HepG2 (cell line): ENCODE measurements at regions of chr12 and their contacts with region 1.

Region 1: GRCh38 chr12:124884587-124885438 is 21.1 kb upstream of the SCARB1 start:
- DNase-seq: peak; percentile 84
- ATAC-seq: peak; percentile 74
- H3K4me3 ChIP-seq: peak overlapping the region; percentile 36 to 59 (median 38); a peak in 5 of 6 replicates
- H3K27ac ChIP-seq: peak overlapping the region; percentile 71
- H3K4me1 ChIP-seq: peaks cover 87% of the 10 kb centered on the region
- H3K27me3 ChIP-seq: no peaks in the 10 kb centered on the region
- CTCF ChIP-seq: no peak
- EP300 ChIP-seq: peak in 1 of 2 experiments; percentile 57; a peak in 2 of 4 replicates
- POLR2A ChIP-seq: peak in 1 of 2 experiments; percentile 50; a peak in 1 of 4 replicates
- RAD21 ChIP-seq: no peak; the same call in 1 of the 2 replicates

Region 2: GRCh38 chr12:124518051-124518932 is 366.5 kb before region 1 on chr12:
- CTCF ChIA-PET with region 1: no interaction called
- POLR2A ChIA-PET with region 1: no interaction called
- in situ Hi-C with region 1: no loop called
- intact Hi-C with region 1: no loop called
- DNase-seq: peak; percentile 93
- ATAC-seq: peak; percentile 95
- H3K4me3 ChIP-seq: peak overlapping the region; percentile 79 to 85 (median 83)
- H3K27ac ChIP-seq: peak overlapping the region; percentile 95
- H3K4me1 ChIP-seq: peaks cover 37% of the 10 kb centered on the region
- H3K27me3 ChIP-seq: no peaks in the 10 kb centered on the region
- CTCF ChIP-seq: no peak
- EP300 ChIP-seq: peak in 1 of 2 experiments; percentile 9; a peak in 1 of 4 replicates
- POLR2A ChIP-seq: peak in 1 of 2 experiments; percentile 61; a peak in 2 of 4 replicates
- RAD21 ChIP-seq: no peak

Region 3: GRCh38 chr12:124872068-124872719 is 12.6 kb before region 1 on chr12:
- CTCF ChIA-PET with region 1: no interaction called
- POLR2A ChIA-PET with region 1: interaction called, 12 read pairs
- in situ Hi-C with region 1: no loop called
- intact Hi-C with region 1: no loop called
- DNase-seq: no peak
- ATAC-seq: peak; percentile 67
- H3K4me3 ChIP-seq: peak overlapping the region; percentile 19 to 52 (median 35)
- H3K27ac ChIP-seq: peak overlapping the region; percentile 12
- H3K4me1 ChIP-seq: peaks cover 85% of the 10 kb centered on the region
- H3K27me3 ChIP-seq: no peaks in the 10 kb centered on the region
- CTCF ChIP-seq: no peak
- EP300 ChIP-seq: no peak
- POLR2A ChIP-seq: no peak
- RAD21 ChIP-seq: no peak

Region 4: GRCh38 chr12:124898200-124898922 is 13.5 kb after region 1 on chr12:
- CTCF ChIA-PET with region 1: interaction called, 5 read pairs
- POLR2A ChIA-PET with region 1: interaction called, 17 read pairs
- in situ Hi-C with region 1: no loop called
- intact Hi-C with region 1: loop called (anchors 2 kb)
- DNase-seq: peak; percentile 63
- ATAC-seq: peak; percentile 60
- H3K4me3 ChIP-seq: no peak overlapping the region
- H3K27ac ChIP-seq: no peak overlapping the region
- H3K4me1 ChIP-seq: peaks cover 85% of the 10 kb centered on the region
- H3K27me3 ChIP-seq: no peaks in the 10 kb centered on the region
- CTCF ChIP-seq: peak; percentile 85
- EP300 ChIP-seq: no peak
- POLR2A ChIP-seq: no peak
- RAD21 ChIP-seq: peak; percentile 88

Region 5: DNA sequence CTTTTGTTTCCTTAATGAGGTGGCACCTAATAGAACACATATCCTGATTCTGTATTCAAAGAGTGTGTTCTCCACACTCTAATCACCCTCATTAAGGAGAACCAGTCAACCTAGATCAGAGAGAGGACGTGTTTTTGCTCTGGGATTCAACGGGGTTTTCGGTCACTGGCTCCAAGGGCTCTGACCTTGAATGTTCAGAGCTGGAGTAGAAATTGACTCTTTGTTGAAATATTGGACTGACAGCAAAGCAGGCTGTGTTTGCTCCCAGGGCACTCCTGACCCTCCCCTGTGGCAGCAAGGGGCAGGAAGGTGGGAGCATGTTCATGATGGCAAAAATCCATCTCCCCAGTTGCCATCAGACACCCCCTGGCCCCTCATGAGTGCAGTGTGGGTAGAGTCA is 1373.4 kb after region 1 on chr12:
- CTCF ChIA-PET with region 1: no interaction called
- POLR2A ChIA-PET with region 1: no interaction called
- in situ Hi-C with region 1: no loop called
- intact Hi-C with region 1: no loop called
- DNase-seq: no peak
- ATAC-seq: no peak
- H3K4me3 ChIP-seq: no peak overlapping the region
- H3K27ac ChIP-seq: no peak overlapping the region
- H3K4me1 ChIP-seq: no peaks in the 10 kb centered on the region
- H3K27me3 ChIP-seq: no peaks in the 10 kb centered on the region
- CTCF ChIP-seq: no peak
- EP300 ChIP-seq: no peak
- POLR2A ChIP-seq: no peak
- RAD21 ChIP-seq: no peak